ENCODE measurements at regions of chr14 and their contacts with region 1.

Region 1: GRCh38 chr14:25049568-25050268 is at the start of gene STXBP6:
- DNase-seq: peak; percentile 81
- ATAC-seq: peak; percentile 87
- total RNA-seq, gene STXBP6: 41.4 TPM

Region 2: GRCh38 chr14:24806061-24806678 is 243.5 kb before region 1 on chr14:
- intact Hi-C with region 1: loop called (anchors 2 kb)
- DNase-seq: no peak
- ATAC-seq: peak; percentile 67

Region 3: GRCh38 chr14:24817212-24818057 is 232.3 kb before region 1 on chr14:
- intact Hi-C with region 1: loop called (anchors 1 kb)
- DNase-seq: no peak
- ATAC-seq: peak; percentile 62

Region 4: GRCh38 chr14:24965934-24966578 is 83.7 kb before region 1 on chr14:
- intact Hi-C with region 1: loop called (anchors 5 kb)
- DNase-seq: no peak
- ATAC-seq: peak; percentile 84

Region 5: DNA sequence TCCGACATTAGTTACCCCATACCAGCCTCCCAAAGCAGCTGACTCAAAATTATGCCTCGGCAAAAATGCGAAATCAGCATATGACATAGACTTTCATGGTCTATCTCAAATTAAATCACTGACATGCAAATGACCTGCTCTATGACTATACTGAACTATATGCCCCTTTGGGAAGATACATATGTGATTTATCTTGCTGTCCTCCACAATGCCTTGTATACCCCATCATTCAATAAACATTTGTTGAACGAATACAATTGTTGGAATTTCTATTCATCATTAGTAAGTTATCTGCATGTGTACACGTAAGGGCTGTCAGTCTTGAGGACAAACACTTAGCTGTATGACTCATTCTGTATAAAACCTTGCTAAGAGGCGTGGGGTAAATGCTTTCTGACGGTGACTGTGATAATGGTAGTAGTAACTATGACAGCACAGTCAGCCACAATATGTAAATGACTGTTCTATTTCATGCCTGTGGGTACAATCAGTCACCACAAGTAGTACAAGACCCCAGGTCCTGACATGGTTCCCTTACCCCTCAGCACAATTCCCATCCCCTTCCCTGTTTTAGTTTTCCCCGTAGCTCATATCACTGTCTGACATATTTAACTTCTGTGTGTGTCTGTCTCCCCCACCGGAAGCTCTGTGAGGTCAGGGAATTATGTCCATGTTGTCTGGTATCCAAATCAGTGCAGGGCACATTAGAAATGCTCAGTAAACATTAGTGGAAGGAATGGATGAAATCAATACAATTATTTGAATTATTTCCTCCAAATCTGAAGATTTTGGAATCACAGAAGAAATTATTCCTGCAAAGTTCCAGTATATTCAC is 42.5 kb before region 1 on chr14:
- intact Hi-C with region 1: loop called (anchors 5 kb)
- DNase-seq: no peak
- ATAC-seq: peak; percentile 72

Region 6: GRCh38 chr14:25111061-25111601 is 61.4 kb after region 1 on chr14:
- intact Hi-C with region 1: loop called (anchors 1 kb)
- DNase-seq: no peak
- ATAC-seq: peak; percentile 98

Region 7: GRCh38 chr14:25132732-25133422 is 83.2 kb after region 1 on chr14:
- intact Hi-C with region 1: loop called (anchors 1 kb)
- DNase-seq: peak; percentile 76
- ATAC-seq: peak; percentile 98

Measured in Right ventricle myocardium inferior (tissue), 1 donor.